ENCODE measurements at regions of chr7 and their contacts with region 1.

Region 1: DNA sequence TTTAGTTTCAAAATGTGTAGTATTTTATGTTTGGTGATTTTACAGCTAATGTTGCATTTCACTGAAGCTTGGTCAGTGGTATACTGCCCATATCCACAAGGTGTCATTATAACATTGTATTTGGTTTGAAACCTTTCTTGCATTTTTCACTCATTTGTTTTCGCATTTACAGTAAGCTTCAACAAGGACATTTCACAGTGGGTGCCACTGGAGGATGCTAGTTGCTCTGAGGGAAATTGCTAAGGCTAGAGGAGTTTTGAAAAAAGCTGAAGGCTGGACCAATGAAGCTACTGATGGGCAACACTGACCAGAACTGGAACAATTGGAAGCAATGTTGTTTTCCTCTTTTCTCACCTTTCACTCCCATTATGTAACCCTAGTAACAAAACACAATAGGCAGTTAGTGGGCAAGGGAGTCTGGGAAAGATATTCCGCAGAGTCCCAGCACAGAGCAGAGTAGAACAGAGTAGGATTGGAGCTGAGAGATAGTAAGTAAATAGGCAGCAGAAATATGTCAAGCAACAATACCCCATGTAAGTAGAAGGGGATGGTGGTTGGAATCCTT is 23.6 kb upstream of the SRI start:
- DNase-seq: no peak
- H3K4me3 ChIP-seq: no peak overlapping the region
- H3K27ac ChIP-seq: no peak overlapping the region
- H3K4me1 ChIP-seq: no peaks in the 10 kb centered on the region
- H3K27me3 ChIP-seq: no peaks in the 10 kb centered on the region
- CTCF ChIP-seq: peak; percentile 78

Region 2: GRCh38 chr7:88191911-88192310 is 51.5 kb before region 1 on chr7:
- intact Hi-C with region 1: no loop called
- DNase-seq: no peak
- H3K4me3 ChIP-seq: no peak overlapping the region
- H3K27ac ChIP-seq: no peak overlapping the region
- H3K4me1 ChIP-seq: no peaks in the 10 kb centered on the region
- H3K27me3 ChIP-seq: no peaks in the 10 kb centered on the region
- CTCF ChIP-seq: no peak

Region 3: DNA sequence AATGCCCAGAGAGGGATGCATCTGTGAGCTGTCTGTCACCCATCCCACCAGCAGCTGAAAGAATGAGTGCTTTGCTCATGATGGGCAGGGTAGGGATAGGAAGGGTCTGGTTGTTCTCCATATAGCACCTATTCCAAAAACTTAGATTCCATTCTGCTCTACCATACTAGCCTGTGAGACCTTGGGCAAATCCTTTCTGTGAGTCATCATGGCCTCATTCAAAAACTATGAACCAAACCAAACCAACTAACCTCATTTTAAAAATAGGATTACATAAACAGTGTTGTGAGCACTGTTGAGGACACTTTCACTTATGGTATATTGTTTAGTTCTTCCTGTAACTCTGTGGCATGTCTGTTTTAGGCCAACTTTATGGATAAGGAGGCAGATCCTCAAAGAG is 94.1 kb after region 1 on chr7:
- intact Hi-C with region 1: no loop called
- DNase-seq: no peak
- H3K4me3 ChIP-seq: no peak overlapping the region
- H3K27ac ChIP-seq: no peak overlapping the region
- H3K4me1 ChIP-seq: no peaks in the 10 kb centered on the region
- H3K27me3 ChIP-seq: no peaks in the 10 kb centered on the region
- CTCF ChIP-seq: no peak

Region 4: DNA sequence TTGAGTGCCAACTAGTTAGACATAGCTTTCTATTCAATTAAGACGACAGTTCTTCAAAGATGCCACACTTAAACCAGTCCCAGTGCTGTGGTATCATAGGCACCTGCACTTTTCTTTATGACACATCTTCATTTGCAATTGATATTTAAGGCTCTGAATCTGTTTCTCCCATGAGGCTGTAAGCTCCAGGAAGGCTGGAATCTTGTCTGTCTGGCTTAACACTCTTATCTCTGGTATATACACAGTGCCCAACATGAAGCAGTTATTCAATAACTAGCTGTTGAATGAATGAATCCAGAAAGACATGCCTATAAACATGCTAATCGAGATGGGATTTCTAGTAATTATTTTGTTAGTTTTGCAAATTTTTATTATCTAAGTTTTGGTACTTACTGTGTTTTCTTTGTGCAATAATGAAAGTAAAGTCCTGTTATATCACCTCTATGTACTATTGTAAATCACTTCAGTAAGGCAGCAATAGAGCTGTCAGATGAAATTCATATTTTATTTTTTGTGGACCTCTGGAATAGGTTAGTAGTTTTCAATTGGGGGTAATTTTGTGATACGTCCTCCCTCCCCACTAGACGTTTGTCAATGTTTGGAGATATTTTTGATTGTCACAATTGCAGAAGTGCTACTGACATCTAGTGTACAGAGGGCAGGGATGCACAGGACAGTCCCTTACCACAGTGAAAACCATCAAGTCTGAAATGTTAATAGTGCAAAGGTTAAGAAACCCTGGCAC is 114.5 kb after region 1 on chr7:
- intact Hi-C with region 1: loop called (anchors 2 kb)
- DNase-seq: no peak
- H3K4me3 ChIP-seq: no peak overlapping the region
- H3K27ac ChIP-seq: no peak overlapping the region
- H3K4me1 ChIP-seq: peaks cover 4% of the 10 kb centered on the region
- H3K27me3 ChIP-seq: no peaks in the 10 kb centered on the region
- CTCF ChIP-seq: peak; percentile 14

Region 5: DNA sequence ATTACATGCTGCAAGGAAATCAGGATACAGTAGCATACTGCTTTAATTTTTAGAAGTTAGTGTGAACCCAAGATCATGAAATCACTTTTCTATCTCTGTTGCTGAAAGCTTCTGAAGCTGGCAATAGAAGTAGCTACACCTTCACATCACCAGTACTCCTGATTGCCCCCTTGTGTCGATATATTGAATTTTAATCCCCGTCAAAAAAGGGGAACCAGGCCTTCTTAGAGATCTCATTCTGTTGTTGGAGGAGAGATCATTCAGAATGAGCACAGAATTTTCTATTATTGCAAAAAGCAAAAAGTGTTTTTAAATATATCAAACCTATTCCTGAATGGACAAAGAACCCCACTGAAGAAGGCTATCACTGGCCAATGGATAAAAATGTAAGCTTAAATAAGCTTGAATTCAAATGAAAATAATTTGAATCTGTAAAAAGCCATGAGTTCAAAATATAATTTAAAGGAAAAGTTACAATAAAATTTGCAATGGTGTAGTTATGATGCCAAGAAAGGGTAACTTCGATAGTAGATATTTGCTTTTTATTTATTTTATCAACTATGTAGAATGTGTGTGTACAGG is 591.8 kb after region 1 on chr7:
- intact Hi-C with region 1: loop called (anchors 10 kb)
- DNase-seq: no peak
- H3K4me3 ChIP-seq: no peak overlapping the region
- H3K27ac ChIP-seq: no peak overlapping the region
- H3K4me1 ChIP-seq: no peaks in the 10 kb centered on the region
- H3K27me3 ChIP-seq: no peaks in the 10 kb centered on the region
- CTCF ChIP-seq: peak; percentile 20

Measured in colonic mucosa (tissue), 4 donors.